Endothelial cell of umbilical vein (primary cell): ENCODE measurements at regions of chr15 and their contacts with region 1.

Region 1: GRCh38 chr15:39624806-39625205 is 43.9 kb downstream of the THBS1 start:
- DNase-seq: peak; percentile 98
- H3K4me3 ChIP-seq: no peak overlapping the region
- H3K27ac ChIP-seq: peak overlapping the region; percentile 87
- H3K4me1 ChIP-seq: peaks cover 49% of the 10 kb centered on the region
- H3K27me3 ChIP-seq: no peaks in the 10 kb centered on the region
- CTCF ChIP-seq: no peak
- POLR2A ChIP-seq: peak; percentile 76

Region 2: DNA sequence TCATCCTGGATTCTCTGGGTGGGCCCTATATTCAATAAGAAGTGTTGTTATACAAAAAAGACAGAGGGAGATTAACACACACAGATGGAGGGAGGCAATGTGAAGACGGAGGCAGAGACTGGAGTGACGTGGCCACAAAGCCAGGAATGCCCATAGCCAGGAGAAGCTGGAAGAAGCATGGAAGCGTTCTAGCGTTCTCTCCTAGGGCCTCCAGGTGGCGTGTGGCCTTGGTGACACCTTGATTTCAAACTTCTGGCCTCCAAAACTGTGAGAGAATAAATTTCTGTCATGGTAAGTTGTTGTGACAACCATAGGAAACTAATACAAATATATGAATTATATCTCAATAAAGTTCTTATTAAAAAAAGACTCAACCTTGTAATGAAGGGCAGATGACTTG is 22.7 kb before region 1 on chr15:
- CTCF ChIA-PET with region 1: interaction called, 5 read pairs
- POLR2A ChIA-PET with region 1: interaction called, 13 read pairs
- dilution Hi-C with region 1: no loop called
- intact Hi-C with region 1: loop called (anchors 1 kb)
- DNase-seq: no peak
- H3K4me3 ChIP-seq: no peak overlapping the region
- H3K27ac ChIP-seq: no peak overlapping the region
- H3K4me1 ChIP-seq: peaks cover 7% of the 10 kb centered on the region
- H3K27me3 ChIP-seq: no peaks in the 10 kb centered on the region
- CTCF ChIP-seq: peak; percentile 24 to 31
- POLR2A ChIP-seq: no peak

Region 3: DNA sequence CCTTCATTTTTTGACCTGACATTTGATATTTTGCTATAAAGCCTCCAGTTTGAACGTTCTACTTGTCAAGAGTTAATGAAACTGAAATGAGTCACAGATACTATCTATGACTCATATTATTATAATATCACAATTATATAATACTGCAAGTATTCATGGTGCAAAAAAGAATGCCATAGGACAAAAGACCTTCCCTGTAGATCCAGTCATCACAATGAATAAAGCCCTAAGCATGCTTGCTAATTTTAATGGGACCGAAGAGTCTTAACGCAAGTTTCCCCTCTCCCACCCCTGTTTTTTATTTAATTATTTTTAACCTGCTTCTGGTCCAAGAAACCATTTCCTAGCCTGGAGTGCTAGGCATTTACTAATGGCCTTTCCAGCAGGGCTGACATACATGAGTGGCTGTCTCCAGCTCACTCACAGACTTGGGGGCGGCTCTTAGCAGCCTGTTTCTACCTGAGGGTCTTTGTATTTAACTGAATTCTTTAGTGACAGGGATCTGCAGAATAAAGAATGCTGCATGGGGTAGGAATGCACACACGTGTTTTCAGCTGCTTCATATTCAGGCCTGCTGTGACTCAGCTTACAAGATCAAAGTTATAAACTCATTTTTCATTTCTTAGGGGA is 17.3 kb after region 1 on chr15:
- CTCF ChIA-PET with region 1: interaction called, 11 read pairs
- POLR2A ChIA-PET with region 1: no interaction called
- dilution Hi-C with region 1: no loop called
- intact Hi-C with region 1: loop called (anchors 2 kb)
- DNase-seq: peak; percentile 82
- H3K4me3 ChIP-seq: no peak overlapping the region
- H3K27ac ChIP-seq: peak overlapping the region; percentile 81
- H3K4me1 ChIP-seq: peaks cover 20% of the 10 kb centered on the region
- H3K27me3 ChIP-seq: no peaks in the 10 kb centered on the region
- CTCF ChIP-seq: no peak
- POLR2A ChIP-seq: no peak

Region 4: GRCh38 chr15:39657714-39658113 is 32.9 kb after region 1 on chr15:
- CTCF ChIA-PET with region 1: interaction called, 4 read pairs
- POLR2A ChIA-PET with region 1: no interaction called
- dilution Hi-C with region 1: no loop called
- intact Hi-C with region 1: loop called (anchors 5 kb)
- DNase-seq: peak; percentile 53
- H3K4me3 ChIP-seq: no peak overlapping the region
- H3K27ac ChIP-seq: peak overlapping the region; percentile 45
- H3K4me1 ChIP-seq: peaks cover 14% of the 10 kb centered on the region
- H3K27me3 ChIP-seq: no peaks in the 10 kb centered on the region
- CTCF ChIP-seq: no peak
- POLR2A ChIP-seq: no peak

Region 5: GRCh38 chr15:39670687-39671086 is 45.9 kb after region 1 on chr15:
- CTCF ChIA-PET with region 1: no interaction called
- POLR2A ChIA-PET with region 1: no interaction called
- dilution Hi-C with region 1: no loop called
- intact Hi-C with region 1: no loop called
- DNase-seq: no peak
- H3K4me3 ChIP-seq: no peak overlapping the region
- H3K27ac ChIP-seq: no peak overlapping the region
- H3K4me1 ChIP-seq: peaks cover 13% of the 10 kb centered on the region
- H3K27me3 ChIP-seq: no peaks in the 10 kb centered on the region
- CTCF ChIP-seq: no peak
- POLR2A ChIP-seq: no peak

Region 6: GRCh38 chr15:39920510-39921273 is 295.9 kb after region 1 on chr15:
- CTCF ChIA-PET with region 1: no interaction called
- POLR2A ChIA-PET with region 1: no interaction called
- dilution Hi-C with region 1: no loop called
- intact Hi-C with region 1: loop called (anchors 10 kb)
- DNase-seq: peak; percentile 83
- H3K4me3 ChIP-seq: peak overlapping the region; percentile 77 to 93 (median 79)
- H3K27ac ChIP-seq: peak overlapping the region; percentile 82
- H3K4me1 ChIP-seq: peaks cover 21% of the 10 kb centered on the region
- H3K27me3 ChIP-seq: no peaks in the 10 kb centered on the region
- CTCF ChIP-seq: peak in 1 of 2 donors; percentile 5
- POLR2A ChIP-seq: peak; percentile 73